Dendritic cell treated with granulocyte-macrophage colony-stimulating factor and Interleukin-4, amounts not matched to agents 40 ng/mL and 50 ng/mL, for 4 days (primary cell): ENCODE measurements at regions of chr11 and their contacts with region 1.

Region 1: DNA sequence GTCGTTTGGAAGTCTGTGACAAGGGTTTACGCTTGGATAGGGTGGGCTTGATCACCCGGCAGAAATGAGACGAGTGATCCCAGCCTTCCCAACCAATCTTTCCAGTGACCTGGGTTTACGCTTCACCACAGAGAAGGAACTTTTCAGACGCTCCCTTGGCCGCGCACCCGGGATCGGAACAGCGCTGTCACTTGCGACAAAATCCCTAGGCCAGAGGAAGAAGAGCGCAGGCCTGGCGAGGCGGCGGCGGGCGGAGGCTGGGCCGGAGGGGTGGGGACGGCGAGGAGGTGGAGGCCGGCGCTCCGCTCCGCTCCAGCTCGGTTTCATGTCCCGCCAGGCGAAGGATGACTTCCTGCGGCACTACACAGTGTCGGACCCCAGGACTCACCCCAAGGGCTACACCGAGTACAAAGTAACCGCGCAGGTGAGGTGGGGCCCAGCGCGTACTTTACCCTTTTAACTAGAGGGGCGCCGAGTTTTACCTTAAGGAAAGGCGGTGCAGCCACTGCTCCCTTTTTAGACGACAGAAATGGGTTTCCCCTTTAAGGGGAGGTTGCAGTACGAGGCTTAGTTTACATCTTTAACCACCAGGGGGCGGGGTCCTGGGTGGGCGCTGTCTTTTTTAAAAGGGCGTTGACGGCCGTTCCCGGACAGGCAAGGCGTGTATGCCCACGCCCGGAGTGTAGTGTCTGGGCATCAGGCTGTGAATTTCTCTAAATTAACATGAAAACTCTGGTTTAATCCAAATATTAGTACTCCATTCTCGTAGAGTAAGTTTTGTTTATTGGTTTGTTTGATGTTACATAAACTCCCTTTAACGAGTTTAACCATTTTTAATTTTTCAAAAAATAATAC is at the start of gene SNX15:
- H3K4me3 Mint-ChIP-seq: peak within 1 kb of the TSS; percentile 75
- H3K27ac Mint-ChIP-seq: peak within 1 kb of the TSS; percentile 80
- H3K4me1 Mint-ChIP-seq: peaks cover 25% of the 10 kb centered on the region
- H3K27me3 Mint-ChIP-seq: no peaks in the 10 kb centered on the region

Region 2: DNA sequence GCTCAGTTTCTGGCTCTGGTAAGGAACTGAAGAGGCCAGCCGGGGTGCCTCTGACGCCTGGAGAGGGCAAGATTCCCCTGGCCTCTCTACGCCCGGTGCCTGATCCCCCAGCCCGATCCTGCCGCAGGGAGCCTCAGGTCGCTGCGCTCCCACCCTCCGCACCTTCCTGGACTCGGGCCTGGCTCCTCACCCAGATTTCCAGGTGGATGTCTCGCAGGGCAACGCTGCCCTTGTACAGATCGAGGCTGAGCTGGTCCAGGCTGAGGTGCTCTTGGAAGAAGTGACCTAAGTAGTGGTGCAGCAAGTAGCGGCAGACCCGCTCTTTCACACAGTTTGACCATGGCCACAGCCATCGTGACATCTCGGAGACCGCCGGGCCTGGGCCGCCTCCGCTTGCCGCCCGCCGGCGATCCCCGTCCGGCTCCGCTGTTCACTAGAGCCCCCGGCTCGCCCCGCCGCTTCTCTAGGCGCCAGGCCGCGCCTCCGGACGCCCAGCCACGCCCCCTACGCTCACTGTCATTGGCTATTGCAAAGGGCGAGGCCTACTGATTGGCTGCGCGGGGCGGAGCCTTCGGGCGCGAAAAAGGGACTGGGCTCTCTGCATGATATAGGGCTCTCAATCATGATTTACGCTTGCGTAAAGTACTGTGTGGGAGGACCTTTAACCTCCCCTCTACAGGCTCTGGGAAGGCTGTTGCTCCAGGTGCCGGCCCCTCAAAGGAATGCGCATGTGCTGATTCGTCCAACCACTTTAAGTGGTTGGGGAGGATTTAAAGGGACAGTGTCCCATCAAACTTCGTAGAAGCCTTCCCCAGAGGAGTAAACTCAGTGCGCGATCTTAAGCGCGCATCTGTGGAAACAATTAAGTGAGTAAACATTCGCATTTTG is 110.4 kb before region 1 on chr11 and contains the start of gene ATG2A:
- intact Hi-C with region 1: loop called (anchors 2 kb)
- H3K4me3 Mint-ChIP-seq: peak within 1 kb of the TSS; percentile 92
- H3K27ac Mint-ChIP-seq: peak within 1 kb of the TSS; percentile 84
- H3K4me1 Mint-ChIP-seq: peaks cover 27% of the 10 kb centered on the region
- H3K27me3 Mint-ChIP-seq: no peaks in the 10 kb centered on the region

Region 3: DNA sequence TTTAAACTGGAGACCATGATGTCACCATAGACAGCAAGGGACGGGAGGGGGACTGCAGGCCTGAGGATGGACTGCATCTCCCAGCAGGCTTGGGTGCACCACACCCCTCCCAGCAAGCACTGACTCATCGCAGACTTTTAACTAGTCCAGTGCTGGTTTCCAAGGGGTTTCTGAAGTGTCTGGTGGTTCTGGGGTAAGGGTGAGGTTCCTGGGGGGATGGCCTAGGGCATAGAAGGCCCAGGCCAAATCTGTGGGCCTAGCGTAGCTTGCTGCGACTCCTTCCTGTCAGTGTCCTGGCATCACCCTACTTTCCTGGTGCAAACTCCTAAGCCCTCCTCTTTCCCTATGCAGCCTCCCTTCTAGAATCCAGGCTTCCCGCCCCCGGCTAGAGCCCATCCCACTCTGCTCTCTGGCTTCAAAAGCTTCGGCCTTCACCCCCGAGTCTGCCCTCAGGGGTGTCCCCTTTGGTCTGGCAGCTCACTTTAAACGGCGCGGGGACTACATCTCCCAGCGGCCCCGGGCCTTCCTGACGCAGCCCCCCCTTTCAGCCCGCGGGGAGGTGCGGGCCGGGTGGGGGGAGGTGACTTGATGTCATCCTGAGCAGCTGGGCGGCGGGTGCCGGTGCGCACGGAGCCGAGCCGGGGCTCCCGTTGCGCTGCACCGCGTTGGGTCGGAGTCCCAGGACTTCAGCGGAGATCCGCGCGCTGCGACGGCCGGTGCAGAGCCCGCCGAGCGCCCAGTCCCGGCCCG is 103.2 kb before region 1 on chr11 and contains the start of gene PPP2R5B:
- intact Hi-C with region 1: loop called (anchors 2 kb)
- H3K4me3 Mint-ChIP-seq: peak within 1 kb of the TSS; percentile 99
- H3K27ac Mint-ChIP-seq: peak within 1 kb of the TSS; percentile 98
- H3K4me1 Mint-ChIP-seq: peaks cover 20% of the 10 kb centered on the region
- H3K27me3 Mint-ChIP-seq: peaks cover 9% of the 10 kb centered on the region

Region 4: DNA sequence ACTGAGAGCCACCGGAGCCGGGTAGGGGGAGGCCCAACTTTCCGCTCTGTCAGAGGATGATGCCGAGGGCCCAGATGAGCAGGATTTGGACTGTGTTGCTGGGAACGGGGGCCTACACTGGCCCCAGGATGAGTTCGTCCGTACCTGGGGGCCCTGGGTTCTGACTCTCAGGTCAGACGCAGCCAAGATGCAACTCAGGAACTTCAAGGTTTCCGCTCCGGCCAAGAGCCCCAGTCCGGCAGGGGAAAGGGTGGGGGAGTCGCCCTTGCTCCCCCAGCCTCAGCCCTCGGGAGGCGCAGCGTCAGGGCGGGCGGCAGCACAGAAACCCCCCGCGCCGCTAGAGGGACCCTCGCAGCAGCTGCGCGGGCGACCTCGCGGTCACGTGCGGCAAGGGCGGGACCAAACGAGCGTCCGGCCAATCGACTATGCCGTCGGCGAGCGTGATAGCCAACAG is 13.7 kb before region 1 on chr11:
- intact Hi-C with region 1: loop called (anchors 1 kb)
- H3K4me3 Mint-ChIP-seq: peak overlapping the region; percentile 89
- H3K27ac Mint-ChIP-seq: peak overlapping the region; percentile 97
- H3K4me1 Mint-ChIP-seq: peaks cover 31% of the 10 kb centered on the region
- H3K27me3 Mint-ChIP-seq: no peaks in the 10 kb centered on the region

Region 5: DNA sequence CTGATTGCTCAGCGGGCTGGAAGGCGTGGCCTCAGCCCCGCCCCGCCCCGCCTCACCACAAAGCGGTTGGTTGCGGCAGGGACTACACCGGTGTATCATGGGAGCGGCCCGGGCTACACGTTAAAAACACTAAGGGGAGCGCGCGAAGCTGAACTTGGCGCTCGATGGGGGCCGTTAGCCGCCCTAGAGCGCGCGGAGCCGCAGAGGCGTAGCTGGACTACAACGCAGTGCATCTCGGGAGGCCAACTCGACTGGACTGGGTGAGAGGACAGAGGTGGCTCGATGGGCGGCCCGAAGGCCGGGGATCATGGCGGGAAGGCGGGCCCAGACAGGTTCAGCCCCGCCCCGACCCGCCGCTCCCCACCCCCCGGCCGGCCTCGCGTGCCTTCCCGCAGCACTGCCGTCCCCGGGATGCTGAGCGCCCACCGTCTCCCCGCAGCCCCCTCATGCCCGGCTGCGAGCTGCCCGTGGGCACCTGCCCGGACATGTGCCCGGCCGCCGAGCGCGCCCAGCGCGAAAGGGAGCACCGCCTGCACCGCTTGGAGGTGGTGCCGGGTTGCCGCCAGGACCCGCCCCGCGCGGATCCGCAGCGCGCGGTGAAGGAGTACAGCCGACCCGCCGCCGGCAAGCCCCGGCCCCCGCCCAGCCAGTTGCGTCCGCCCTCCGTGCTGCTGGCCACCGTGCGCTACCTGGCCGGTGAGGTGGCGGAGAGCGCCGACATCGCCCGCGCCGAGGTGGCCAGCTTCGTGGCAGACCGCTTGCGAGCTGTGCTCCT is 13.6 kb after region 1 on chr11 and contains the start of gene SAC3D1:
- intact Hi-C with region 1: loop called (anchors 1 kb)
- H3K4me3 Mint-ChIP-seq: peak within 1 kb of the TSS; percentile 80
- H3K27ac Mint-ChIP-seq: peak within 1 kb of the TSS; percentile 94
- H3K4me1 Mint-ChIP-seq: peaks cover 59% of the 10 kb centered on the region
- H3K27me3 Mint-ChIP-seq: peaks cover 1% of the 10 kb centered on the region

Region 6: DNA sequence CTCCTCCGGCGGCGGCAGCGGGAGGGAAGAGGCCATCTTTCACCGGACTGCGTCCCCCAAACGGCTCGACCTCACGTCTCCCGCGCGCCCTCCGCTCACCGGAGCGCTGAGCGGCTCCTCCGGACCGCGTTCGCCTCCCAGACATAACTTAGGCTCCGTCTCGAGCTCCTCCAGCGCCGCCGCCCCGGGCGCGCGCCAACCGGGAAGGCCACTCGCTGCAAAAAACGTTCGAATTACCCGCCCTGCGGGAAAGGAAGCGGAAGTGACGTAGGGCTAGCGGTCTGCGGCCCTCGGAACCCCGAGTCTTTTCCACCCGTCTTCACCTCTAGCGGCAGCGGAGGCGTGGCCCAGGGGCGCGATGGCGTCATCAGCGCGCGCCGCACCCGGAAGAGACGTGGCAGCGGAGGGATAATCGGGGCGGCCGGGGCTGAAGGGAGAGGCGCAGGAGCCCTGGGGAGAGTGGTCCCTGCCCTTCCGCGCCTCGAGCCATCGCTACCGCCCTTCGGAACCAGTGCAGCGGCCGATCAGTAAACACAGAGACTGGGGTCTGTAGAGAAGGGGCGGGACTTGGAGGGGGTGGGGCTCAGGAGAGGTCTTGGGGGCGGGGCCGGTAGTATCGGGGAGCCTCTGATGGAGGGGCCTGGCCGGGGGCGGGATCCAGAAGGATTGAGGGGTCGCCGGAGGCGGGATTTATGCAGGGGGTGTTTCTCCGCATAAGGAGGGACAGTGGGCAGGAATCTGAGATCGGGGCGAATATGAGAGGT is 56.6 kb after region 1 on chr11 and contains the starts of genes CDCA5 and ZFPL1:
- intact Hi-C with region 1: loop called (anchors 1 kb)
- H3K4me3 Mint-ChIP-seq: peak within 1 kb of the TSS; percentile 97
- H3K27ac Mint-ChIP-seq: peak within 1 kb of the TSS; percentile 95
- H3K4me1 Mint-ChIP-seq: peaks cover 50% of the 10 kb centered on the region
- H3K27me3 Mint-ChIP-seq: no peaks in the 10 kb centered on the region

Region 7: DNA sequence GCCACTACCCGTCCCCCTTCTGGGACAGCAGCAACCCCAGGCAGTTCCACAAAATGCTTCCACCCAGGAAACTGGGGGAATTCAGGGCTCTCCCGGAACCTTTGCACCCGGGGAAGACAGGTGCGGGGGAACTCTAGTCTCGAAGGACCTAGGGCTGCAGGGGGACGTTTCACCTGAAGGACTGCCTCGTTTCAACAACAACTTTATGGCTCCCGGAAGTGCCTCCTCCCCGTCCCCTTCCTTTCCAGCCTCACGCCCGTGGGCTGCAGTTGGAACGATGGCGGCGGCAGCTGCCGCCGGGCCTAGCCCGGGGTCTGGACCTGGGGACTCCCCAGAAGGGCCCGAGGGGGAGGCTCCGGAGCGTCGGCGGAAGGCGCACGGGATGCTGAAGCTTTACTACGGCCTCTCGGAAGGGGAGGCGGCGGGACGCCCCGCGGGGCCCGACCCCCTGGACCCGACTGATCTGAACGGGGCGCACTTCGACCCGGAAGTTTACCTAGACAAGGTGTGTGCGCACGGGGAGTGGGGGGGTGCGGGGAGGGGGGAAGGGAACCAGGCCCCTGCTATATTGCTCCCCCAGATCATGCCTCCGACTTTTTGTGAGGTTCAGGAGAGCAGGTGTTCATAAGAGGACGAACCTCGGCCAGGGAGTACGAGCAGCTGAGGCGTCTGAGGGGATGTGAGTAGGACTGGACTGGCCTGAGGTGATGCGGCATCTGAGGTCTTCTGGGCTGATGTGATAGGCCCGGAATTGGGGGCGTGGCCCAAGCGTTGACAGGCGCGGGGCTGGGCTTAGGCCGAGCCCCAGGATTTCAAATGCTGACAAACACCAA is 68.8 kb after region 1 on chr11 and contains the start of gene VPS51:
- intact Hi-C with region 1: loop called (anchors 1 kb)
- H3K4me3 Mint-ChIP-seq: peak within 1 kb of the TSS; percentile 79
- H3K27ac Mint-ChIP-seq: peak within 1 kb of the TSS; percentile 79
- H3K4me1 Mint-ChIP-seq: peaks cover 18% of the 10 kb centered on the region
- H3K27me3 Mint-ChIP-seq: no peaks in the 10 kb centered on the region